ENCODE measurements at regions of chr3 and their contacts with region 1.

Region 1: DNA sequence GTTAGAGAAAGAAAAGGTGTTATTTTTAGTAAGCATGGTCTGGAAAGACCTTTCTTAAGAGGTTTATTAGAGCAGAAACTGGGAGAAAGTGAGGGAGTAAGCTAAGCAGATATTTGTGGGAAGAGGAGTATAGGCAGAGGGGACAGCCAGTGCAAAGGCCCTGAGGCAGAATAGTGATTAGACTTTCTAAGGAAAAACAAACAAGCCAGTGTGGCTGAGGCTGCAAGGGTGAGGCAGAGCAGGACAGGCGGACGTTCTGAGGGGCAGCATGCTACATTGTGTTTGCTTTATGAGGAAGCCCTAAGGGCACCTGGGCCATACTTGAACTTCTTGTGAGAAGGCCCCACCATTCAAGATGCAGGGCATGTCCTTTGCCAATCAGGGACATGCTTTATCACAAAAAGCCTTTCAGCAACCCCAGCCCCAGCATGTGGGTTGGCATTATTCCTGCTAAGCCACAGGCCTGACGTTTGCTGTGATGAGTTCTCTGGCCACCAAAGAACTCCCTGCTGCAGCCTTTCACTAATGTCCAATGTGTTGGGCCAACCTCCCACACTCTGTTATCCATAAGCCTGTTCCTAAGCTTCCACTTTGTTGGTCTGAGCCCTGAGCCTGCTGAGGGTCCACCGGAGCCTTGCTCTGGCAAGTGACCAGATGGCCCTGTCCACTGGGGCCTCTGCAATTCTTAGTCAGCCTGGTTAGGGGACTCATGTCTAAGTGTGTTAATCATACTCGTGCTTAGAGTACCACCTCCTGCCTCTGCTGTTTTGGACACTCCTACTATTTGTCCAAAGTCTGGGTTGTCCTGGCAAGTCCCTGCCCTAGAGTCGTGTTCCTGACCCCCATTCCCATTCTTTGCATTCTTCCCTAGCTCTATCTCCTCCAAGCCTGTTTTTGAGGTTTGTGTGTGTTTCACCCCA is 209.9 kb upstream of the CTNNB1 start:
- DNase-seq: no peak
- ATAC-seq: no peak
- H3K4me3 Mint-ChIP-seq: no peak overlapping the region
- H3K27ac Mint-ChIP-seq: no peak overlapping the region
- H3K4me1 Mint-ChIP-seq: no peaks in the 10 kb centered on the region
- H3K27me3 Mint-ChIP-seq: peaks cover 14% of the 10 kb centered on the region

Region 2: DNA sequence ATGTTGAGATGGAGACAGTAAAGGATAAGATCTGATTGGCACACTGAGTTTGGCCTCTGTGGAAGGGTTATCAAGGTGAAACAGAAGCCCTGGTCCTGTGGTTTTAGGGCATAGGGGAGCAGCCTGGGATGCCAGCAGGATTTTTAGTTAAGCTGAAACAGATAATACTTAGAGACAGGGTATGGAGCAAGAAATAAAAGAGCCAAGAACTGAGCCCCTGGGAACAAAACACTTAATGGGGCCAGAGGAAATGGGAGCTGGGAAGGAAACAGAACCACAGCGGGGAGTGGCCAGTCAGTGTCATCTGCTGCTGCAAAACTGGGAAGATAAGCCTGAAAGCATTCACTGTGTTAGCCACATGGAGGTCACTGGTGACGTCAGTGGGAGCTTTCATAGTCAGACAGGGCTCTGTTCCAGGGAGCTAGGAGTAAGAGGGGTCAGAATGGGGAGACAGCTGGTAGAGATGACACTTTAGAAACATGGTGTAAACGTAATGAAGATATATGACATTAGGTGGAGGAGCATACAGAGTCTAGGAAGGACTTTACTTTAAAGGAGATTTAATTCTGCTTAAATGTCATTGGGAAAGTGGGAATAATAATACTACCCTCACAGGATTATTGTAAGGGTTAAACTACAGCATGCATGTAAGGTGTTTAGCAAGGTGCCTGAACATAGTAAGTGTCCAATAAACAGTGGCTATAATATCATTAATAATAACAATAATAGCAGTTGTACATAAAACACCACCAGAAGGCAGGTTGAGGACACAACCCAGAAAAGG is 37.2 kb after region 1 on chr3:
- CTCF ChIA-PET with region 1: no interaction called
- POLR2A ChIA-PET with region 1: no interaction called
- intact Hi-C with region 1: loop called in 1 of 2 experiments (anchors 2 kb)
- DNase-seq: no peak
- ATAC-seq: no peak
- H3K4me3 Mint-ChIP-seq: no peak overlapping the region
- H3K27ac Mint-ChIP-seq: no peak overlapping the region
- H3K4me1 Mint-ChIP-seq: no peaks in the 10 kb centered on the region
- H3K27me3 Mint-ChIP-seq: peaks cover 3% of the 10 kb centered on the region